Gastrocnemius medialis (tissue), 4 donors: ENCODE measurements at regions of chr1 and their contacts with region 1.

Region 1: DNA sequence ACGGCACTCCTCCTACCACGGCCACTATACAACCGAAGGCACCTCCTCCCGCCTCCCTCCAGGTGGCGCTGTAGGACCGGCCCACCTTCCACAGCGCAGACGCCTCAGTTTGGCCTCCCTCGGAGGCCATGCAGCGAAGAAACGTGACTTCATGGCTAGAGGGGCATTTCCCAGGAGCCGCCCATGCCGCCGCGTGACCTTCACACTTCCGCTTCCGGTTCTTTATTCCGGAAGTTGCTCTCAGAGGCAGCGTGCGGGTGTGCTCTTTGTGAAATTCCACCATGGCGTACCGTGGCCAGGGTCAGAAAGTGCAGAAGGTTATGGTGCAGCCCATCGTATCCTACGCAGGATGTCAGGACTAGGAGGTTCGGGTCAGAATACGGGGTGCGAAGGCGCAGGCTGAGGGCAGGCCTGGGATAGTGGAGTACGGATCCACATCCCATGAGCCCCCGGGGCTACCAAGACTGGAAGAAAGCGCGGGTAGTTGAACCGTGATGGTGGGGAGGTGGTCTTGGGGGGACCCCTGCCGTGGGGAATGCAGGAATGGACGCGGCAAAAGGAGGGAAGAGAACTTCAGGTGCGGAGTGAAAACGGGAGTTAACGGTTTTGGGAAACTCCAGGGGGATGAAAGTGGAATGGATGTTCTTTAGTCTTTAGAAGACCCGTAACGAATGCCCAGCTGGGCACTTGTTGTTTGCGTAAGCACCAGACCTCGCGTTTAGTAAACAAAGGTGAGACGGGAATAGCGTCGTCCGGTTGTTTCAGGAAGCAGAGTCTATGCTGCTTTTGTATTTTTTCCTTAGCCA is at the start of gene SNRPE:
- DNase-seq: peak; percentile 95
- ATAC-seq: peak; percentile 96 to 99
- H3K4me3 ChIP-seq: peak within 1 kb of the TSS; percentile 86 to 96 (median 89)
- H3K27ac ChIP-seq: peak within 1 kb of the TSS; percentile 78 to 85 (median 82)
- H3K4me1 ChIP-seq: peaks cover 12 to 14% of the 10 kb centered on the region in 2 donors
- H3K27me3 ChIP-seq: no peaks in the 10 kb centered on the region
- CTCF ChIP-seq: peak; percentile 86 to 98 (median 95)
- POLR2A ChIP-seq: peak; percentile 41 to 74
- total RNA-seq, gene SNRPE: 23.7 to 39.1 (median 30.5) TPM

Region 2: GRCh38 chr1:204059970-204060369 is 198.4 kb after region 1 on chr1:
- in situ Hi-C with region 1: no loop called
- intact Hi-C with region 1: no loop called
- DNase-seq: peak in 1 of 2 donors; percentile 28
- ATAC-seq: peak in 1 of 2 donors; percentile 53
- H3K4me3 ChIP-seq: no peak overlapping the region
- H3K27ac ChIP-seq: no peak overlapping the region
- H3K4me1 ChIP-seq: no peaks in the 10 kb centered on the region
- H3K27me3 ChIP-seq: no peaks in the 10 kb centered on the region
- CTCF ChIP-seq: no peak
- POLR2A ChIP-seq: no peak

Region 3: DNA sequence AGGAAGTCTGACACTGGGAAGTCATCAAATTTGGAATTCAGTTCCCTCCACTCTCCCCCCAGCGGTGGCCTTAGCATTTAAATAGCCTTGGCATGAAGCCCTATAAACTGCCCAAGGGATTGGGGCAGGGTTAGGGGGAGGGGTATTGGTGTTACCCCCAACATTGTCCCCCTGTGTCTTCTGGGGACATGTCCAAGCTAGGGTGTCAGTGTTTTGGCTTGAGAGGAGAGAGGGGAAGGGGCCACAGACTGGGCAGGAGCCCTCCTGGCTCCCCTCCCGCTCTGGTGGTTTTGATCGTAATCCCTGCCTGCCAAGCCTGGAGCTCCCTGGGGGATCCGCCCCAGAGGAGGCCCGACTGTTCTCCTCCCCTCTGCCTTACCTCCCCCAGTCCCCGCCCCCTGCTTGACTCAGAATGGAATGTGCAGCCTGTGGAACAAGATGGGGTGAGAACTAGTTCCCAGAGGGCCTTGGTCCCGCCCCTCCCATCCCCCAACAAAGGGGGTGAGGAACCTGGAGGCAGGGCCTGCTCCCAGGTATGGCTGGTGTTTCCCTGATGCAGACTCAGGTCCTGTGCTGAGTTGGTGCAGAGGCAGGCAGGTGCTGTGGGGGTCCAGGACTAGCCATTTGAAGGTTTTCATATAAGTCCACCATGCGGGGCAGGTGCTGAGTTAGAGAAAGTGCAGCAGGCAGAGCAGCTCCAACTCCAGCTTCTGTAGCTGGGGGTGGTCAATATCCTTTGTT is 218.8 kb after region 1 on chr1:
- in situ Hi-C with region 1: no loop called
- intact Hi-C with region 1: loop called (anchors 5 kb)
- DNase-seq: peak; percentile 60 to 66
- ATAC-seq: peak; percentile 17 to 33
- H3K4me3 ChIP-seq: peak overlapping the region; percentile 2 to 31 (median 12)
- H3K27ac ChIP-seq: peak overlapping the region; percentile 85 to 94 (median 92)
- H3K4me1 ChIP-seq: peaks cover 84 to 90% of the 10 kb centered on the region in 2 donors
- H3K27me3 ChIP-seq: no peaks in the 10 kb centered on the region
- CTCF ChIP-seq: peak in 1 of 5 experiments; percentile 12
- POLR2A ChIP-seq: no peak

Region 4: GRCh38 chr1:204128964-204129896 is 267.6 kb after region 1 on chr1:
- in situ Hi-C with region 1: loop called in 2 of 4 experiments (anchors 5 kb)
- intact Hi-C with region 1: loop called (anchors 1 kb)
- DNase-seq: peak; percentile 33 to 64
- ATAC-seq: peak; percentile 54 to 86
- H3K4me3 ChIP-seq: peak overlapping the region; percentile 23 to 55 (median 36)
- H3K27ac ChIP-seq: peak overlapping the region; percentile 1 to 45 (median 38)
- H3K4me1 ChIP-seq: peaks cover 14 to 32% of the 10 kb centered on the region in 2 donors
- H3K27me3 ChIP-seq: no peaks in the 10 kb centered on the region
- CTCF ChIP-seq: peak; percentile 86 to 97 (median 95)
- POLR2A ChIP-seq: no peak

Region 5: DNA sequence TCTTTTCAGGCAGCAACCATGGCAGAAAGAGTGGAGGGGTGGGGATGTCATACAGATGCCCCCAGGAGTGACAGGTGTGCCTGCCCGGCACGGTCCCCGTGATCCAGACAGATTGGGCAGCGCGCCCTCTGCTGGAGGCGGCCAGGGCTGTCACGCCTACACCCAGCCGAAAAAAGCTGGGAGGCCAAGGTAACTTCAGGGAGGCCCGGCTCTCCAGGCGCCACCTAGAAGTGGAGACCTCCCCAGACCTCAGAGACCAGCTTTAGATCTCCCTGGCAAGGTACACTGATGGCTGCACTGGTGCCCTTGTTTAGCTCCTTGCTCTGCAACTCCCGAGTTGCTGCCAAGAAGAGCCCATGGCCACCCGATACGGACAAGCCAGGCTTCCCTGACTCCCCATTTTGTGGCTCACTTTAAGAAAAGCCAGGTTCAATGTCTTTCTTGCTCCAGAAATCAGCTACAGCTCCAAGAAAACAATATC is 345.6 kb after region 1 on chr1:
- in situ Hi-C with region 1: no loop called
- intact Hi-C with region 1: loop called (anchors 5 kb)
- DNase-seq: peak; percentile 34 to 37
- ATAC-seq: peak; percentile 74 to 75
- H3K4me3 ChIP-seq: no peak overlapping the region
- H3K27ac ChIP-seq: no peak overlapping the region
- H3K4me1 ChIP-seq: no peaks in the 10 kb centered on the region
- H3K27me3 ChIP-seq: peaks cover 0 to 6% (median 3%) of the 10 kb centered on the region in 3 donors
- CTCF ChIP-seq: peak; percentile 61 to 91 (median 88)
- POLR2A ChIP-seq: no peak

Region 6: DNA sequence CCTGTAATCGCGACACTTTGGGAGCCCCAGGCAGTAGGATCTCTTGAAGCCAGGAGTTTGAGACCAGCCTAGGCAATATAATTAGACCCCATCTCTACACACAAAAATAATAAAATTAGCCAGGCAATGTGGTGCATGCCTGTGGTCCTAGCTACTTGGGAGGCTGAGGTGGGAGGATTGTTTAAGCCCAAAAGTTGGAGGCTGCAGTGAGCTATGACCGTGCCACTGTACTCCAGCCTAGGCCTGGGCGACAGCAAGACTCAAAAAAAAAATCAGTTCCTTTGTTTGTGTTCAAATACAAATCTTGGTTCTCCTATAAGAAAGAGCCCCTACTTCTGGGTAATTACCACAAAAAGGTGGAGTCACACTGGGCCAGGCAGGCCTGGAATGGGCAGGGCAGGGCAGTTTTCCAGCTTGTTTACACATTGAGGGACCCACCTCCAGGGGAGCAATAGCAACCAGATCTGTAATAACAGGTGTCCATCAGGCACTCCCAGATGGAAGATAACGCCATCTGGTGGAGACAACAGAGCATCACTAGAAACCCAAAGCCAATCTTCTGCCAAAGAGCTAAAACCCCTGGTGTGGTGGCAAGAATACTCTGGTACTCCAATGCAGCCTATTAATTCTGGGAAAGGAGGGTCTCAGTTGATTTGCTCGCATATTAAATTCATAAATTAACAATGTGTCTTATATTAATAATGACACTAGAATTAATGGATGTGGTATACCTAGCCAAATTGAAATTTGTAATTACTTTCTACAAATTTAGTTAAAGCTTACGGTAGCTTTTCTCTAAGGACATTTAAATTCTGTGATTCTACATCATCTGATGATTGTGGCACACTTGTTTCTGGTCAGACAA is 536.9 kb after region 1 on chr1:
- in situ Hi-C with region 1: loop called in 1 of 4 experiments (anchors 25 kb)
- intact Hi-C with region 1: no loop called
- DNase-seq: peak; percentile 57 to 70
- ATAC-seq: peak; percentile 91 to 93
- H3K4me3 ChIP-seq: no peak overlapping the region
- H3K27ac ChIP-seq: peak overlapping the region; percentile 17 to 68 (median 34)
- H3K4me1 ChIP-seq: peaks cover 0 to 3% of the 10 kb centered on the region in 2 donors
- H3K27me3 ChIP-seq: no peaks in the 10 kb centered on the region
- CTCF ChIP-seq: peak; percentile 61 to 80 (median 77)
- POLR2A ChIP-seq: no peak

Region 7: GRCh38 chr1:204516180-204516879 is 654.7 kb after region 1 on chr1 and contains the start of gene MDM4:
- in situ Hi-C with region 1: loop called in 1 of 4 experiments (anchors 25 kb)
- intact Hi-C with region 1: no loop called
- DNase-seq: peak; percentile 88 to 93
- ATAC-seq: peak; percentile 98 to 99
- H3K4me3 ChIP-seq: peak within 1 kb of the TSS; percentile 76 to 95 (median 82)
- H3K27ac ChIP-seq: peak within 1 kb of the TSS; percentile 89 to 97 (median 96)
- H3K4me1 ChIP-seq: peaks cover 33 to 34% of the 10 kb centered on the region in 2 donors
- H3K27me3 ChIP-seq: no peaks in the 10 kb centered on the region
- CTCF ChIP-seq: no peak
- POLR2A ChIP-seq: peak; percentile 64 to 78
- total RNA-seq, gene MDM4: 15.1 to 44.0 (median 28.9) TPM